ENCODE measurements at regions of chr5 and their contacts with region 1.

Region 1: GRCh38 chr5:8756498-8757084 is 789.3 kb downstream of the SEMA5A start:
- DNase-seq: no peak
- ATAC-seq: peak in 1 of 2 donors; percentile 52

Region 2: DNA sequence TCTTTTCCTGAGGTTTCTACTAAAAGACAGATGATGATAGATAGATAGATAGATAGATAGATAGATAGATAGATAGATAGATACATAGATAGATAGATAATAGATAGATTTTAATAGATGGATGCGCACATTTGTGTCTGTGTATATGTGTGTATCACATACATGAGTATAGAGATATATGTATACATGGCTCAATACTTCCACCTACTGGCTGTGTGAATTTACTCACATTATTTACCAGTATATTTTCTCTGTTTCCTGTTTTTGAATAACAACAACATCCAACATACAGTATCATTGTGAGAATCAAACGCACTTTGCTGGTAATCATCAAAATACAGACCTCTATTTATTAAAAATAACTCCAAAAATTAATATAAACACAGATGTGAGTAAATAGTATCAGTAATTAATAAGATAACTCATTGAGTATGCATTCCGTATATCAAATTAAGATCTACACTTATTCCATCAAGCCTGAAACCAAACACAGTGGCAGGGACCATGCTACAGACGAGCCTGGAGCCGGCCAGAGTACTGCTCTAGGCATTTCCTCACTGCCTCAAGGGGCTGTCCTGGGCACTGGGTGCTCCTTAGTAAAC is 451.3 kb after region 1 on chr5:
- intact Hi-C with region 1: loop called in 1 of 2 experiments (anchors 10 kb)
- DNase-seq: no peak
- ATAC-seq: peak in 1 of 2 donors; percentile 44

Region 3: GRCh38 chr5:9617221-9617620 is 860.6 kb after region 1 on chr5:
- intact Hi-C with region 1: loop called in 1 of 2 experiments (anchors 5 kb)
- DNase-seq: no peak
- ATAC-seq: peak in 1 of 2 donors; percentile 27